ENCODE measurements at regions of chr12 and their contacts with region 1.

Region 1: GRCh38 chr12:54324617-54325441 is at the start of gene COPZ1:
- DNase-seq: peak; percentile 100
- H3K4me3 ChIP-seq: peak within 1 kb of the TSS; percentile 38 to 85 (median 67)
- H3K27ac ChIP-seq: peak within 1 kb of the TSS; percentile 73
- H3K4me1 ChIP-seq: peaks cover 20% of the 10 kb centered on the region
- H3K27me3 ChIP-seq: no peaks in the 10 kb centered on the region
- CTCF ChIP-seq: peak; percentile 72 to 80
- POLR2A ChIP-seq: peak; percentile 91
- total RNA-seq, gene COPZ1: 137 and 143 TPM in 2 replicates

Region 2: GRCh38 chr12:54220092-54220557 is 104.7 kb before region 1 on chr12:
- CTCF ChIA-PET with region 1: interaction called, 10 read pairs
- POLR2A ChIA-PET with region 1: no interaction called
- dilution Hi-C with region 1: no loop called
- intact Hi-C with region 1: loop called (anchors 1 kb)
- DNase-seq: peak; percentile 76
- H3K4me3 ChIP-seq: no peak overlapping the region
- H3K27ac ChIP-seq: no peak overlapping the region
- H3K4me1 ChIP-seq: peaks cover 14% of the 10 kb centered on the region
- H3K27me3 ChIP-seq: peaks cover 2 to 5% of the 10 kb centered on the region in 2 experiments
- CTCF ChIP-seq: peak; percentile 77 to 85
- POLR2A ChIP-seq: no peak

Region 3: DNA sequence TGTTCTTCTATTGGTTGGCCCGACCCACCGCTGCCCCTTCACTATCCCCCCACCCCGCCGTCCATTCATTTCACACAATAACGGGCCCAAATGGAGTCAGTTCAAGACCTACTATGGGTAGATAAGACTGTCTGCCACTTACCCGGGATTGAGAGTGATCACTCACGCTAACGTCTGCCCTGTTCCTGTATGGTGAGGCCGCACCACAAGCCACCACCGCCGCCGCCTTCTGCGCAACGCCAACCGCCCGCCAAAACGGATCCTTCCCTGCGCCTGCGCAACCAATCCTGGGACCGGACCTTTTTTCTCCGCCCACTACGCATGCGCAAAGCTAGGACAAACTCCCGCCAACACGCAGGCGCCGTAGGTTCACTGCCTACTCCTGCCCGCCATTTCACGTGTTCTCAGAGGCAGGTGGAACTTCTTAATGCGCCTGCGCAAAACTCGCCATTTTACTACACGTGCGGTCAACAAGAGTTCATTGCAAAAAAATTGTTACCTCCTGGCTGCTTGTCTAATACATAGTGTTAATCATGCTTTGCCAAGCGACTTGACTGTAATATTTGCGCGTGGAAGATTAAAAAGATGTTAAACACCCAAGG is 44.9 kb before region 1 on chr12 and contains the start of gene CBX5:
- CTCF ChIA-PET with region 1: interaction called, 20 read pairs
- POLR2A ChIA-PET with region 1: interaction called, 15 read pairs
- dilution Hi-C with region 1: no loop called
- intact Hi-C with region 1: loop called (anchors 1 kb)
- DNase-seq: peak; percentile 99
- H3K4me3 ChIP-seq: peak within 1 kb of the TSS; percentile 28 to 78 (median 61)
- H3K27ac ChIP-seq: peak within 1 kb of the TSS; percentile 88
- H3K4me1 ChIP-seq: peaks cover 43% of the 10 kb centered on the region
- H3K27me3 ChIP-seq: no peaks in the 10 kb centered on the region
- CTCF ChIP-seq: no peak
- POLR2A ChIP-seq: peak; percentile 1
- total RNA-seq, gene CBX5: 111 TPM in 2 replicates

Region 4: DNA sequence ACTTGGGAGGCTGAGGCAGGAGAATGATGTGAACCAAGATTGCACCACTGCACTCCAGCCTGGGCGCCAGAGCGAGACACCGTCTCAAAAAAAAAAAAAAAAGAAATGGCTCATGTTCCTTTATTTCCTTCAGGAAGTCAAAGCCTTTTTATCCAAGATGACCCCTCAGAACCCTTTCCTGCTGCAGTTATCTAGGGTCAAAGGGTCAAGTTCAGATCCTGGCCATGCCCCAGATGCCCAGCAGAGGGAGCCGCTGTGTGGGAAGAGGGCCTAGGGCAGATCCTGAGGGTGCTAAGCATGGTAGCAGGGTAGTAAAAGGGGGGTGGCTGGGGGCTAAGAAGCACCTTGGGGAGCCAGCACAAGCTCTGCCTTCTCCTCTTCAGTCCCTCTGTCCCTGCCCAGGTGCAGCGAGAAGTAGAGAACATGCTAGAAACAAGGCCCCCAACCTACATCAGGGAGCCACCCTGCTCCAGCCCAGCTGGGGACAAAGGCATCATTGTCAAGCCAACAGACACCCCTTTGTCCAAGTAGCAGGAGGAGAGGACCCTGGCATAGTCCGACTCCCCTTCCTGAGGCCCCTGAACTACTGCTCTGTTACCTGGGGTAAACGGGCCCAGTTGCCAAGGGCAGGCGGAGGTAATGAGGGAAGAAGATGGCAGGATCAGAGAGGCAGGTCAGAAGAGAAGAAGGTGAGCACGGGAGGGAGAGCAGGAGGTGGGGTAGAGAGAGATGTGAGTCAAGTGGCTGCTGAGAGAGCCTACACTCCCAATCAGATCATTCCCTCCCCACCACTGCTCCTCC is 30.5 kb before region 1 on chr12:
- CTCF ChIA-PET with region 1: interaction called, 32 read pairs
- POLR2A ChIA-PET with region 1: interaction called, 5 read pairs
- dilution Hi-C with region 1: no loop called
- intact Hi-C with region 1: no loop called
- DNase-seq: peak; percentile 53
- H3K4me3 ChIP-seq: no peak overlapping the region
- H3K27ac ChIP-seq: no peak overlapping the region
- H3K4me1 ChIP-seq: no peaks in the 10 kb centered on the region
- H3K27me3 ChIP-seq: peaks cover 4 to 6% of the 10 kb centered on the region in 2 experiments
- CTCF ChIP-seq: peak; percentile 71 to 74
- POLR2A ChIP-seq: no peak

Region 5: GRCh38 chr12:54337280-54337842 is 12.5 kb after region 1 on chr12:
- CTCF ChIA-PET with region 1: interaction called, 41 read pairs
- POLR2A ChIA-PET with region 1: interaction called, 5 read pairs
- dilution Hi-C with region 1: no loop called
- intact Hi-C with region 1: no loop called
- DNase-seq: no peak
- H3K4me3 ChIP-seq: no peak overlapping the region
- H3K27ac ChIP-seq: no peak overlapping the region
- H3K4me1 ChIP-seq: no peaks in the 10 kb centered on the region
- H3K27me3 ChIP-seq: no peaks in the 10 kb centered on the region
- CTCF ChIP-seq: no peak
- POLR2A ChIP-seq: no peak

Region 6: DNA sequence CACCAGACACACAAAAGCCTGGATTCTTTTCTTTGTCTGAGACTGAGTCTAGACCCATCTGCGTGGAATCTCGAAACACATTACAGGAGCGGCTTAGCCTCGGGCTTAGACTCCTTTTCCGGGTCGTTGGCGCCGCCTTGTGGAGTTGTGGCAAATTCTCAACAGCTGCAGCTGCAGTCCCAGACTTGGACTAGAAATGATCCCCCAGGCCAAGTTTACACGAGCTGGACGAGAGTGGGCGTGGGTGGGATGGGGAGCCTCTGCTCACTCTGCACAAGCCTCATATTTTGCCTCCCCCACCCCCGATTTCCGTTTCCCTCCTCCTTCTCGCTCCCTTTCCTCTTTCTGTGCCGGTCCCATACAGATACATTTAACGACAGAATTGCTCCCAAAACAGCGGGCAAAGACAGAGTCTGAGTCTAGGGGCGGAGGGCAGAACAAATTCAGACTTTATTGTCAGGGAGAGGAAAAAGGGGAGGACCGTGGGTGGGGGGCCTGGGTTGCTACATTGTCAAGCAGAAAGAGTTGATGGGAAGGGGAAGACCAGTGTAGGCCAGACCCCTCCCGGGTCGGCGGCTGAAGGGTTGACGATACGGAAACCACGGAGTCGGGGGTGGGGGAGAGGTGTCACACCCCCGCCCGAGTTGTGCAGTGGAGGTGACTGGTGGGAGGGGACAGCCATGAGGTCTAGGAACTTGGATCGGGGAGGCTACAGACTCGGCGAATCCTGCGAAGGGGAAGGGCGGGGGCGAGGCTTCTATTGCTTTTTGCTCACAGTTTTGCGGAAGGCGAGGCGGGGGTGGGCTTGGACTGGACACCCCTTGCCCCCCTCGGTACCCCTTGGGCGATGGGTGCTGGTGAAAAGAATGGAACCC is 44.1 kb after region 1 on chr12:
- CTCF ChIA-PET with region 1: interaction called, 7 read pairs
- POLR2A ChIA-PET with region 1: no interaction called
- dilution Hi-C with region 1: no loop called
- intact Hi-C with region 1: loop called (anchors 2 kb)
- DNase-seq: peak; percentile 85
- H3K4me3 ChIP-seq: peak overlapping the region; percentile 6 to 39 (median 23)
- H3K27ac ChIP-seq: no peak overlapping the region
- H3K4me1 ChIP-seq: peaks cover 33% of the 10 kb centered on the region
- H3K27me3 ChIP-seq: no peaks in the 10 kb centered on the region
- CTCF ChIP-seq: peak; percentile 91 to 92
- POLR2A ChIP-seq: no peak

Region 7: DNA sequence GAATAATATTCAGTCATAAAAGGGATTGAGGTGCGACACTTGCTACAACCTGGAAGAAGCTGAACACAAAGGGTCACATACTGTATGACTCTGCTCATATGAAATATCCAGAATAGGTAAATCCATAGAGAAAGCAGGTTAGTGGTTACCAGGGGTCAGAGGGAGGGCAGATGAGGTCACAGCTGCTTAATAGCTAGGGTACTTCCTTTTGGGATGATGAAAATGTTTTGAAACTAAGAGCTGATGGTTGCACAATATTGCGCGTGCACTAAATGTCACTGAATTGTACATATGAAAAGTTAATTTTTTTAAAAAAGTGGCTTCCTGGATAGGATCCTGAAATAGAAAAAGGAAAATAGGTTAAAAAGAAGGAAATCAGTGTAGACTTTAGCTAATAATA is 718.7 kb after region 1 on chr12:
- CTCF ChIA-PET with region 1: no interaction called
- POLR2A ChIA-PET with region 1: no interaction called
- dilution Hi-C with region 1: no loop called
- intact Hi-C with region 1: no loop called
- DNase-seq: no peak
- H3K4me3 ChIP-seq: no peak overlapping the region
- H3K27ac ChIP-seq: no peak overlapping the region
- H3K4me1 ChIP-seq: no peaks in the 10 kb centered on the region
- H3K27me3 ChIP-seq: no peaks in the 10 kb centered on the region
- CTCF ChIP-seq: no peak
- POLR2A ChIP-seq: no peak

Measured in endothelial cell of umbilical vein (primary cell).